K562 (cell line): ENCODE measurements at regions of chr11 and their contacts with region 1.

Region 1: DNA sequence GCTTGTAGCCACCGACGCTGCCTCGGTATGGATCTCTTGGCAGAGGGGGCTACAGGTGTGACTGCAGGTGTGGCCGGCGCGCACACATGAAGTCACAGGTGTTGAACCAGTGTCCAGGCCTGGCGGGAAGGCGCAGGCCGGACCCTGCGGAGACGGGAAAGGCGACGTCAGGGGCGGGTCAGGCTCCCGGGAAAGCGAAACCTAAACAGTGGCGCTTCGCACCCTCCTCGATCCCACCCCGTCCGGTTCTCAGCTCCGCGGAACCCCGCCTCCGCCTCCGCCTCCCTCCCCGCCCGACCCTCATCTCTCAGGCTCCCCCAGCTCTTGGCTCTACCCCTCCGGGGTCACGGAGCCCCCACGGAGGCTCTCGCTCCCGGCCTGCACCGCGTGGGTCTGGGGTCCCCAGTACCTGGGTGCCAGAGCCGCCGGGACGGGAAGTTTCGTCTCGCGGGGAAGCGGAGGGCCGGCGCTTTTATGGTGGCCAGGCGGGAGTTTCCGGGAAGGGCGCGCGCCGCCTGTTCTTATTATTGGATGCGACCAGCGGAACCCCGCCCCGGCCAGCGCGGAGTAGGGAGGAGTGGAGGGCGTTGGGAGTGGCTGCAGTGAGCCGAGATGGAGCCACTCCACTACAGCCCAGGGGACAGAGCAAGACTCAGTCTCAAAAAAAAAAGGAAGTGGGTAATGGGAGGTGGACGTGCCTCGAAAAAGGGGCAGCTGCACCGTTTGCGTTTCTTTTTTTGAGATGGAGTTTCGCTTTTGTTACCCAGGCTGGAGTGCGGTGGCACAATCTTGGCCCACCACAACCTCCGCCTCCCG is at the start of gene IRF7:
- DNase-seq: peak; percentile 85 to 92 (median 86)
- ATAC-seq: peak; percentile 92
- H3K4me3 ChIP-seq: peak within 1 kb of the TSS; percentile 78
- H3K27ac ChIP-seq: peak within 1 kb of the TSS; percentile 84
- H3K4me1 ChIP-seq: peaks cover 8 to 84% of the 10 kb centered on the region in 2 experiments
- H3K27me3 ChIP-seq: no peaks in the 10 kb centered on the region
- CTCF ChIP-seq: no peak
- EP300 ChIP-seq: no peak
- POLR2A ChIP-seq: peak; percentile 81
- RAD21 ChIP-seq: no peak
- polyA plus RNA-seq, gene IRF7: 0.27 to 0.48 TPM

Region 2: DNA sequence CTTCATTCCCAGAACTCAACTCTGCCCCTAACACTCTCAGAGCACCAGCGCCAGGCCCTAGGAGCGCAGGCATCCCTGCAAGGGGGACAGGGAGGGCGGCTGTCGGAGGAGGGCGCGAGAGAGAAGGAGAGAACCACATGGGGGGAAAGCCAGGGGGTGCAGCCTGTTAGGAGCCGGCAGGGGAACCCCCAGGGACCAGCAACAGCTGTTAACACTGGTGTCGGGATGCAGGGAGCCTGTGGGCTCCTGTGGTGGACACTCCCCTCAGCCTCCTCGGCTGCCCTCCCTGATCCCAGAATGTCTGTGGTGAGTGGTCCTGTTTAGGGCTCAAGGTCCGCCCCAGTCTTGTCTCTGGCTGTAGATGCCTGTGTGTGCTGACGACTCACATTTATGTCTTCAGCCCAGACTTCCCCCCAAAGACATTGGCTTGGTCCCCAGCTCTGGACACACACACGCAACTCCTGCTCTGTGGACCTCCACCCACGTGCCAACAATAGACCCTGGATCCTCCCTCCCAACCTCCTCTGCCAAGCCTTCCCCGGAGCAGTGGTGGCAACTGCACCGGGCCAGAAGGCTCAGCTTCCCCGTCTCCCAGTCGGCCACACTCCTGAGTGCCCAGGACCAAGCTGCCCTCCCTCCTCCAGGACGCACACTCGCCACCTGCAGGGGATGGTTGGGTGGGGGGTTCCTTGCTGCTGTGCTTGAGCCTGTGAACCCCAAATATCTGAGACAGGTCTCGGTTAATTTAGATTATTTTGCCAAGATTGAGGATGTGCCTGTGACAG is 315.6 kb before region 1 on chr11:
- CTCF ChIA-PET with region 1: no interaction called
- POLR2A ChIA-PET with region 1: no interaction called
- in situ Hi-C with region 1: no loop called
- intact Hi-C with region 1: no loop called
- DNase-seq: peak; percentile 53 to 66 (median 62)
- ATAC-seq: peak; percentile 42
- H3K4me3 ChIP-seq: no peak overlapping the region
- H3K27ac ChIP-seq: no peak overlapping the region
- H3K4me1 ChIP-seq: peaks cover 20 to 61% of the 10 kb centered on the region in 2 experiments
- H3K27me3 ChIP-seq: no peaks in the 10 kb centered on the region
- CTCF ChIP-seq: peak; percentile 48 to 91 (median 61); a peak in 5 of 6 replicates
- EP300 ChIP-seq: no peak
- POLR2A ChIP-seq: no peak
- RAD21 ChIP-seq: peak in 1 of 2 experiments; percentile 45; a peak in 2 of 4 replicates

Region 3: GRCh38 chr11:535519-536454 is 79.9 kb before region 1 on chr11 and contains the start of gene HRAS:
- CTCF ChIA-PET with region 1: no interaction called
- POLR2A ChIA-PET with region 1: no interaction called
- in situ Hi-C with region 1: no loop called
- intact Hi-C with region 1: no loop called
- DNase-seq: peak; percentile 96 to 100 (median 99)
- ATAC-seq: peak; percentile 95
- H3K4me3 ChIP-seq: peak within 1 kb of the TSS; percentile 78
- H3K27ac ChIP-seq: peak within 1 kb of the TSS; percentile 72
- H3K4me1 ChIP-seq: peaks cover 22 to 82% of the 10 kb centered on the region in 2 experiments
- H3K27me3 ChIP-seq: no peaks in the 10 kb centered on the region
- CTCF ChIP-seq: no peak
- EP300 ChIP-seq: no peak
- POLR2A ChIP-seq: peak; percentile 76
- RAD21 ChIP-seq: no peak
- polyA plus RNA-seq, gene HRAS: 2.8 to 5.8 TPM

Region 4: DNA sequence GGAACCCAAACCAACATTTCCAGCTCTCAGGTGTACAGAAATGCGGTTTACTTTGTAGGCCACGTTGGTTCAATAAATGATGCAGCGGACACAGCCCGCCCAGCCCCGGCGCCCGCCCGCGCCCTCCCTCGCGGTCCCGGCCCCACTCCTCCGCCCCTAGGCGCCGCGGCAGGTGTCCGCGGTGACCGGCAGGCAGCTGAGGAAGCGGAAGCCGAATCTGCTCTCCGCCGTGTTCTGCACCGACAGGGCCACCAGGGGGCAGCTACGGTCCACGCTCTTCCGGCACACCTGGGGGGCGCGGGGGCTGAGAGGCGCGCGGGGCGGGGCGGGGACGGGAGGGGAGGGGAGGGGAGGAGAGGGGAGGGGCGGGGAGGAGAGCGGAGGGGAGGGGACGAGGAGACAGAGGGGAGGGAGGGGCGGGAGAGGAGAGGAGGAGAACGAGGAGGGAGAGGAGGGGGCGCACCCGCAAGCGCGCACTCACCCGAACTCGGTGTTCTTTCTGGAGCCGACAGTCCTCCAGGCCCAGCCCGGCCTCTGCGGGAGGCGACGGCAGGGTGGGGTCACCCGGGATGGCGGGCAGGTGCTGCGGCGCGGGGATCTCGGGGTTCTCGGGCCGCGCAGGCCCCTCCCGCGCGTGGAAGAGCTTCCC is 60.8 kb before region 1 on chr11:
- CTCF ChIA-PET with region 1: no interaction called
- POLR2A ChIA-PET with region 1: interaction called, 5 read pairs
- in situ Hi-C with region 1: no loop called
- intact Hi-C with region 1: loop called (anchors 10 kb)
- DNase-seq: peak; percentile 79 to 90 (median 82)
- ATAC-seq: peak; percentile 81
- H3K4me3 ChIP-seq: peak overlapping the region; percentile 27
- H3K27ac ChIP-seq: peak overlapping the region; percentile 56
- H3K4me1 ChIP-seq: peaks cover 23 to 99% of the 10 kb centered on the region in 2 experiments
- H3K27me3 ChIP-seq: no peaks in the 10 kb centered on the region
- CTCF ChIP-seq: peak in 2 of 3 experiments; percentile 62 to 74; a peak in 5 of 6 replicates
- EP300 ChIP-seq: no peak
- POLR2A ChIP-seq: no peak
- RAD21 ChIP-seq: peak in 1 of 2 experiments; percentile 49; a peak in 2 of 4 replicates

Region 5: DNA sequence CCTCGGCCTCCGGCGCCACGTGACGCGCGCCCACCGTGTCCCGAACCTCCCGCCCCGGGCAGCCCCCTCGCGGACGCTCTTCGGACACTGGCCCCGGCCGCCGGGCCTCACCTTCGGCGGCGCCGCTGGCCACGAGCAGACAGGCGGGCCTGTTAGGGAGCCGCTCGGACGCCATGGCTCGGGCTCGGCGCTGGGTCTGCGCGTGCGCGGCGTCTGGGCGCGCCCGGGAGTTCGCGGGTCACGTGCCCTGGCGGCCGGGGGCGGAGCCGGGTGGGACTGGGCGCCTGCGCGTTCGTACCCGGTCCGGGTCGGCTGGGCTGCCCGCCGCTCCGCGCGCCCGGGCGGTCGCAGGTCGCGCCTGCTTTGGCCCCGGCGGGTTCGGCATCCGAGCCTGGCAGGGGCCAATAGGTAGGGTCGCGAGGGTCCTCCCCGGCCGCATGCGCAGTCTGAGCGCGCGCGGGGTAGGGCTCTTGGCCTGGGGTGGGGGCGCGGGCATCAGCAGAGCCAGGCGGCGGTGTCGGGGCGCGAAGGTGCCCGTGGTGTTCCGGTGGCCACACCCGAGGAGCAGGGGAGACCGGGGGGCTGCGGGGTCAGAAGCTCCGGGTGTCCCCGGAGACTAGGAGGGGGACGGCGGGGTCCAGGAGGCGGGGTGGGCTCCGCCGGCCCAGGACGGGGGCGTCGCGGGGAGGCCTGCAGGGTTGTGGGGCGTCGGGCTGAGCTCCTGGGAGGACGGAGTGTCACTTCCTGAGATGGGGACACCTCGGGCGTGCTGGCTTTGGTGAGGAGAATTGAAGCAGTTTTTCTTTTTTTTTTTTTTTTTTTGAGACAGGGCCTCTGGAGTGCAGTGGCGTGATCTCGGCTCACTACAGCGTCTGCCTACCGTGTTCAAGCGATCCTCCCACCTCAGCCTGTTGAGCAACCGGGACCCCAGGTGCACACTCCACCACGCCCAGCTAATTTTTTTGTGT is 161.9 kb after region 1 on chr11 and contains the start of gene GATD1:
- CTCF ChIA-PET with region 1: no interaction called
- POLR2A ChIA-PET with region 1: no interaction called
- in situ Hi-C with region 1: no loop called
- intact Hi-C with region 1: no loop called
- DNase-seq: peak; percentile 94 to 99 (median 98)
- ATAC-seq: peak; percentile 88
- H3K4me3 ChIP-seq: peak within 1 kb of the TSS; percentile 81
- H3K27ac ChIP-seq: peak within 1 kb of the TSS; percentile 76
- H3K4me1 ChIP-seq: peaks cover 16 to 87% of the 10 kb centered on the region in 2 experiments
- H3K27me3 ChIP-seq: no peaks in the 10 kb centered on the region
- CTCF ChIP-seq: no peak
- EP300 ChIP-seq: no peak
- POLR2A ChIP-seq: peak; percentile 82
- RAD21 ChIP-seq: no peak
- polyA plus RNA-seq, gene GATD1: 2.8 to 3.3 TPM

Region 6: DNA sequence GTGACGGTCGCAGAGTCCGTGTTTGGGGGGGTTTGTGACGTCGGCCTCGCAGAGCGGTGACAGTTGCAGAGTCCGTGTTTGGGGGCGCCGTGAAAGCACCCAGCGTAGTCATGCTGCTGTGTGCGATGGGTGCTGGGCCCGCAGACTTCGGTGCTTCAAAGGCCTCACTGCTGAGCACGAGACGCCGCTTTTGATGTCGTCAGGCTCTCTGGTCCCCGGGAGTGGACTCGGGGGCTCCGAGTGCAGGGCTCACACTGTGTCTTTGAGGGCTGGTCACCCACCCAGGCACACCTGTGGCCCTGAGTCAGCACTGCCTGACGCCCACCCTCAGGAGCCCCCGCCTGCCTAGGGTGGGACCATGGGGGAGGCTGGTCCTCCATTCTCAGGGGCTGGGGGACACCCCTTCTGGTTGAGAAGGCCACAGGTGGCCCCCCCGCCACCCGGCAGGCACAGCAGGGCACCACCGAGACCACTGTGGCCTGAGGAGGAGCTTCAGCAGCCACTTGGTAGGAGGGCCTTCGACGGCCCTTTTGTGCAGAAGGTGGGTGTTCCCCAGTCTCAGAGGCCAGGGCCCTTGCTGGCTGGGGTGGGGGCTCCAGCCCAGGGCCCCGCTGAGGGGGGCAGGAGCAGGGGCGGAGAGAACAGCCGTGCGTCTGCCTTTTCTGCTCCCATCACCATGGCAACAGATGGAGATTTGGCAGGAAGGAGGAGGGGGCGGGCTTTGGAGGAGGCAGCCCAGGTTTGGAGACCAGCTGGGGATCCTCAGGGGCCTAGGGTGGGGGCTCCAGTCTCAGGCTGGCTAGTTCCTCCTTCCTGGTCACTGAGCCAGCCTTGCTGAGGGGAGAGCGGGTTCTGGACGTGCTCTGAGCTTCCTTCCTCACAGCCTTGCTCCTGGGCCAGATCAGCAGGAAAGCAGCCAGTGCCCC is 794.9 kb after region 1 on chr11:
- CTCF ChIA-PET with region 1: no interaction called
- POLR2A ChIA-PET with region 1: no interaction called
- in situ Hi-C with region 1: no loop called
- intact Hi-C with region 1: no loop called
- DNase-seq: no peak
- ATAC-seq: no peak
- H3K4me3 ChIP-seq: no peak overlapping the region
- H3K27ac ChIP-seq: no peak overlapping the region
- H3K4me1 ChIP-seq: peaks cover 0 to 19% of the 10 kb centered on the region in 2 experiments; a peak in 2 of 5 replicates
- H3K27me3 ChIP-seq: no peaks in the 10 kb centered on the region; a peak in 2 of 5 replicates
- CTCF ChIP-seq: no peak
- EP300 ChIP-seq: no peak
- POLR2A ChIP-seq: no peak
- RAD21 ChIP-seq: no peak